Sigmoid colon (tissue), 7 donors: ENCODE measurements at regions of chr6 and their contacts with region 1.

Region 1: GRCh38 chr6:99393698-99394531 is at the start of gene COQ3:
- DNase-seq: peak; percentile 76
- H3K4me3 ChIP-seq: peak within 1 kb of the TSS; percentile 69 to 88 (median 75)
- H3K27ac ChIP-seq: peak within 1 kb of the TSS; percentile 83 to 86 (median 86)
- H3K4me1 ChIP-seq: peaks cover 0 to 9% (median 4%) of the 10 kb centered on the region in 4 donors
- H3K27me3 ChIP-seq: no peaks in the 10 kb centered on the region
- CTCF ChIP-seq: no peak
- EP300 ChIP-seq: no peak
- POLR2A ChIP-seq: no peak
- total RNA-seq, gene COQ3: 3.0 to 7.9 (median 7.4) TPM

Region 2: GRCh38 chr6:99349171-99350141 is 44.5 kb before region 1 on chr6 and contains the start of gene FAXC:
- intact Hi-C with region 1: loop called (anchors 2 kb)
- DNase-seq: peak; percentile 79
- H3K4me3 ChIP-seq: peak within 1 kb of the TSS; percentile 49 to 90 (median 76)
- H3K27ac ChIP-seq: peak within 1 kb of the TSS; percentile 92 to 93 (median 93)
- H3K4me1 ChIP-seq: peaks cover 0 to 39% (median 13%) of the 10 kb centered on the region in 4 donors
- H3K27me3 ChIP-seq: peaks cover 0 to 3% (median 0%) of the 10 kb centered on the region in 3 donors
- CTCF ChIP-seq: peak in 3 of 4 experiments; percentile 10 to 42 (median 32)
- EP300 ChIP-seq: no peak
- POLR2A ChIP-seq: no peak
- total RNA-seq, gene FAXC: 23.1 to 54.0 (median 39.0) TPM

Region 3: GRCh38 chr6:99512033-99512432 is 118.1 kb after region 1 on chr6:
- intact Hi-C with region 1: no loop called
- DNase-seq: no peak
- H3K4me3 ChIP-seq: no peak overlapping the region
- H3K27ac ChIP-seq: no peak overlapping the region
- H3K4me1 ChIP-seq: peaks cover 0 to 13% (median 11%) of the 10 kb centered on the region in 4 donors
- H3K27me3 ChIP-seq: no peaks in the 10 kb centered on the region
- CTCF ChIP-seq: no peak
- EP300 ChIP-seq: no peak
- POLR2A ChIP-seq: no peak

Region 4: GRCh38 chr6:101241442-101241841 is 1847.5 kb after region 1 on chr6:
- intact Hi-C with region 1: no loop called
- DNase-seq: no peak
- H3K4me3 ChIP-seq: no peak overlapping the region
- H3K27ac ChIP-seq: no peak overlapping the region
- H3K4me1 ChIP-seq: no peaks in the 10 kb centered on the region
- H3K27me3 ChIP-seq: no peaks in the 10 kb centered on the region
- CTCF ChIP-seq: no peak
- EP300 ChIP-seq: no peak
- POLR2A ChIP-seq: no peak